Heart left ventricle (tissue), 16 donors: ENCODE measurements at regions of chr7 and their contacts with region 1.

Region 1: GRCh38 chr7:37765872-37766525 is 82.4 kb upstream of the NME8 start:
- DNase-seq: peak in 1 of 5 donors; percentile 23
- ATAC-seq: peak in 1 of 4 donors; percentile 48
- H3K4me3 ChIP-seq: no peak overlapping the region
- H3K27ac ChIP-seq: peak overlapping the region in 1 of 12 donors; percentile 78
- H3K4me1 ChIP-seq: peaks cover 0 to 15% (median 0%) of the 10 kb centered on the region in 12 donors
- H3K27me3 ChIP-seq: no peaks in the 10 kb centered on the region
- CTCF ChIP-seq: no peak
- POLR2A ChIP-seq: no peak

Region 2: GRCh38 chr7:37741776-37742175 is 24.2 kb before region 1 on chr7:
- intact Hi-C with region 1: loop called in 1 of 10 experiments (anchors 2 kb)
- DNase-seq: no peak
- ATAC-seq: no peak
- H3K4me3 ChIP-seq: no peak overlapping the region
- H3K27ac ChIP-seq: no peak overlapping the region
- H3K4me1 ChIP-seq: peaks cover 0 to 3% (median 0%) of the 10 kb centered on the region in 12 donors
- H3K27me3 ChIP-seq: no peaks in the 10 kb centered on the region
- CTCF ChIP-seq: no peak
- POLR2A ChIP-seq: no peak